ENCODE measurements at regions of chrX and their contacts with region 1.

Region 1: DNA sequence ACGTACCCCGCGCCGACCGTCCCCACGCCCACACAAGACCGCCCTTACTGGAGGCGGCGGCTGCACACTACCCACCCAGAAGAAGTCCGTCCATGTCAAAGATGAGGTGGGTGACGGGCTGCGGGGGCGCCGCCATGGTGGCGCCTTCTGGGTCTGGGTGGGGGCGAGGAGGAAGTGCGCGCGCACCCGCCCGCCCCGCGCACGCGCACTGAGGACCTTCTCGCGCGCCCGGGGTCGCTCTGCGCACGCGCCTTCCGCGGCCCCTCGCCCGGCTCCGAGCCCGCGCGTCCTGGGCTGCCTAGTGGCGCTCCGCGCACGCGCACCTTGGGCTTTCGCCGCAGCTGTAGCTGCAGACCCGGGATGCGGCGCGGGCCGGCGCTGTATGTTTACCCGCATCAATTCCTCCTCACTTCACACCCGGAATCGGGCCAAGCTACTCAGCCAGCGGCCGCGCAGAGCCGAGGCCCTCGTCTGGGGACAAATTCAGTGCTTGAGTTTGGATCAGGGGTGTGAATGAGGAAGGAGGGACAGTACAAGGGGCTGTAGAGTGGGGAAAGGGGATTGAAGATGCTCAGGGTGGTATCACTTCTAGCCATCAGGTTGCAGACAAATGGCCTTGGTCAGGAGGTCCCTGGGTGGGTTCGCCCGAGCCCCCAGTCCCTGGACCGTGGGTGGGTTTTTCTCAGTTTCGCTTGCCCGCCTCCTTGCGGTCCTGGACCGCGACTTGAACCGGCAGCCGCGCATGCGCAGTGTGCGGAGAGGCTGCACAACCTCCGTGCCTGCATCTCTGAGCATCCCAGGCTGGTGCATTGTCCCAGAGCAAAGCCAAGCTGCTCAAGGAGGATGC is at the start of gene PUDP:
- DNase-seq: peak; percentile 73 to 78
- ATAC-seq: peak; percentile 91 to 94
- H3K4me3 ChIP-seq: peak within 1 kb of the TSS; percentile 78
- H3K27ac ChIP-seq: peak within 1 kb of the TSS; percentile 95 to 99
- H3K4me1 ChIP-seq: peaks cover 38% of the 10 kb centered on the region
- CTCF ChIP-seq: no peak
- EP300 ChIP-seq: no peak
- POLR2A ChIP-seq: peak; percentile 28
- RAD21 ChIP-seq: no peak
- polyA plus RNA-seq, gene PUDP: 49.2 and 50.7 TPM in 2 replicates

Region 2: DNA sequence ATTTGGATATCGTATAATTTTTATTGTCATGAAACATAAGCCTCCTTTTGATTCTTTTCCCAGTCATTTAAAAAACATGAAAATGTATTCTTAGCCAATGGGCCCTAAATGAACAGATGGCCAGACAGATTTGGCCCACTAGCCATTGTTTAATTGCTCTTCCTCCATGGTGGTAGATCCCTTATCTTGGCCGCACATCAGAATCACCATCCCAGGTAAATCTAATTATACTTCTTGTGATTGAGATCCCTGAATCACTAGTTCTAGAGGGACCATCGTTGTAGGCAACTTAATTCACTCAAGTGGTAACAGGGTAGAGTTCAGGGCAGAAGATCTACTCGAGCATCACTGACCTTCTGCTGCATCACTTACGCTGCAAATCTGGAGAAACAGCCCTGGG is 589.2 kb before region 1 on chrX:
- CTCF ChIA-PET with region 1: no interaction called
- POLR2A ChIA-PET with region 1: no interaction called
- DNase-seq: no peak
- ATAC-seq: no peak
- H3K4me3 ChIP-seq: no peak overlapping the region
- H3K27ac ChIP-seq: no peak overlapping the region
- H3K4me1 ChIP-seq: no peaks in the 10 kb centered on the region
- CTCF ChIP-seq: no peak
- EP300 ChIP-seq: no peak
- POLR2A ChIP-seq: no peak
- RAD21 ChIP-seq: no peak

Region 3: GRCh38 chrX:7132335-7133049 is 15.7 kb before region 1 on chrX:
- CTCF ChIA-PET with region 1: interaction called, 14 read pairs
- POLR2A ChIA-PET with region 1: interaction called, 3 read pairs
- DNase-seq: peak; percentile 38 to 90
- ATAC-seq: peak; percentile 97 to 99
- H3K4me3 ChIP-seq: no peak overlapping the region
- H3K27ac ChIP-seq: peak overlapping the region; percentile 20 to 70; a peak in 3 of 6 replicates
- H3K4me1 ChIP-seq: peaks cover 14% of the 10 kb centered on the region
- CTCF ChIP-seq: peak; percentile 53
- EP300 ChIP-seq: no peak
- POLR2A ChIP-seq: no peak
- RAD21 ChIP-seq: peak; percentile 47 to 51; a peak in 4 of 5 replicates

Region 4: DNA sequence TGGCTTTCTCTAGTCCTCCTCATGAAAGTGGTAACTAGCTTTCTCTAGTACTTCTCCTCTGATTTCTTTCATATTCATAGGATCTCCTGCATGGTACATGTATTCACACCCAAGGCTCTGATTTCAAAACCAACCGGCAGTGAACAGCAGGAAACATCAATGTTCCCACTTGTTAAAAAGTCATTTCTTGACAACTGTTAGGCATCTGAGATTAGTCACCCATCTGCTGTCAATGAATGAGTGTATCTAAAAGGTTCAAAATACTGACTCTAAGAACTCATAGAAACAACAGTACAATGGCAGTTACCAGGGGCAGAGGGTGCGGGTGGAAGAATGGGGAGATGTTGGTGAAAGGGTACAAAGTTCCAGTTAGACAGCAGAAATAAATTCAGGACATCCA is 31.2 kb after region 1 on chrX:
- CTCF ChIA-PET with region 1: no interaction called
- POLR2A ChIA-PET with region 1: no interaction called
- DNase-seq: no peak
- ATAC-seq: no peak
- H3K4me3 ChIP-seq: no peak overlapping the region
- H3K27ac ChIP-seq: no peak overlapping the region
- H3K4me1 ChIP-seq: no peaks in the 10 kb centered on the region
- CTCF ChIP-seq: no peak
- EP300 ChIP-seq: no peak
- POLR2A ChIP-seq: no peak
- RAD21 ChIP-seq: no peak

Measured in A549 (cell line).